Psoas muscle (tissue), 8 donors: ENCODE measurements at regions of chr5 and their contacts with region 1.

Region 1: DNA sequence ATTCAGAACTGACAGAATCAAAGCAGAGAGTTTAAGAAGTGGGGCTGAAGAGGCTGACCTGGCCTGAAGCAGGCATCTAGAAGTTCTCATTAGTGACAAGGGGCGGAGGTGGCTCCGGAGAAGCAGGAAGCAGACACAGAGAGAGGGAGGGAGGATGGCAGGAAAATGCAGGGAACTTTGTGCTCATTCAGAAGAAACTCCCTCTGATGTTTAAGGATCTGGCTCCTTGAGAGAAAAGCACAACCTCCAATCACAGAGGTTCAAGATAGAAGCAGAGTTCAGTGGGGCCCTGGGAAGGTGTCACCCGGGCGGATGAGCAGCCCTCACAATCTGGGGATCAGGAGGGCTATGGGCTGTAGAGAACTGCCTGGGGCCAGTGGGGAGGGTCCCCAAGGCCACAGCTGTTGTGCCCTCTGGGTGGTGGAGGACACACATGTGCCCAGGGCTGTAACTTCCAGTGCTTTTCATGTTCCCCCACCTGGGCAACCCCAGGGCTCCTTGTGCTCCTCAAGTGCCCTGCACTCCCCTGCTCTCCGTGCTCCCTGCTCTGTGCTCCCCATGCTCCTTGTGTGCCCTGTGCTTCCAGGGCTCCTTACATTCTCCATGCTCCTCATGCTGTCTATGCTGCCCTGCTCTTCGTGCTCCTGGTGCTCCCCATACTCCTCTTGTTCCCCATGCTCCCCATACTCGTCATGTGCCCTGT is 51.4 kb downstream of the TRIP13 start:
- DNase-seq: no peak
- ATAC-seq: no peak
- H3K4me3 ChIP-seq: no peak overlapping the region
- H3K27ac ChIP-seq: no peak overlapping the region
- H3K4me1 ChIP-seq: no peaks in the 10 kb centered on the region
- H3K27me3 ChIP-seq: peaks cover 0 to 57% (median 15%) of the 10 kb centered on the region in 3 donors
- CTCF ChIP-seq: no peak

Region 2: GRCh38 chr5:756171-756570 is 187.9 kb before region 1 on chr5:
- intact Hi-C with region 1: no loop called
- DNase-seq: peak in 1 of 2 donors; percentile 40
- ATAC-seq: peak in 2 of 4 donors; percentile 21 to 43
- H3K4me3 ChIP-seq: no peak overlapping the region
- H3K27ac ChIP-seq: no peak overlapping the region
- H3K4me1 ChIP-seq: peaks cover 25% of the 10 kb centered on the region
- H3K27me3 ChIP-seq: no peaks in the 10 kb centered on the region
- CTCF ChIP-seq: no peak

Region 3: DNA sequence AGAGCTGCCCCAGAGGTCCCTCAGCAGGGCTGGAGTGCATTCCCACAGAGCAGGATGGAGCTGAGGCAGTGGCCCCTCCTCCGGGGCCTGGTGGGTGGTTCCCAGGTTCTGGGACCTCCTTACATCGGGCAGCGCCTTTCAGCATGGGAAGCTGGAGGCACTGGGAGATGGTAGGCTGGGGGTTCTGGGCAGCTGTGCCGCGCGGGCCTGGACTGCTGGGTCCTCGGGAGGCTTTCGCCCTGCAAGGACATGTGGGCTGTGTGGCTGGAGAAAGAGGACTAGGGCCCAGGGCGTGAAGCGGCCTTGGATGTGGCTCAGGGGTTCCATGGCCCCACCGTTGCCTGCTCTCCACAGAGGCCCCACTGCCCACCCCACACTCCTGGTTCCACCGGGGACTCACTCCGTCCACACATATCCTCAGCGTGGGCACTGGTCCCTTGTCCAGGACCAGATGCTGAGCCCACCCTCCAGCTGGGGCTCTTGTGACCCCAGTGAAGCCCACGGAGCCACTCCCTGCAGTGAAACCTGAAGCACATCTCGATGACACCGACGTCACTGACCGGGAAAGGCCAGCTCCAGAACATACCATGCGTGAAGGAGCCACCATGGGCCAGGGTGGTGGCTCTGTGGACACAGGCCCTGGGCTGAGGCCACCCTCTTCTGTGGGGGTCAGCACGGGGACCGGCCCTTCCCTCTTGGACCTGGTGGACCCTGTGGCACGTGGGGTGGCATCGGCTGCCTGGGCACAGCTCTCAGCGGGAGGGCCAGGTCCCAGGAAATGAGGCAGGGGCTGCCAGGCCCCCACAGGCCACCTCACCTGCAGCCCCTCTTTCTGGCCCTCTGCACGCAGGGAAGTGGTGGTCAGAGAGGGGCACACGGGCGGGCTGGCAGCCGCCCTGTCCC is 33.0 kb after region 1 on chr5:
- intact Hi-C with region 1: loop called in 1 of 2 experiments (anchors 1 kb)
- DNase-seq: peak in 1 of 2 donors; percentile 46
- ATAC-seq: no peak
- H3K4me3 ChIP-seq: no peak overlapping the region
- H3K27ac ChIP-seq: no peak overlapping the region
- H3K4me1 ChIP-seq: no peaks in the 10 kb centered on the region
- H3K27me3 ChIP-seq: peaks cover 0 to 4% (median 1%) of the 10 kb centered on the region in 3 donors
- CTCF ChIP-seq: no peak